MCF 10A (cell line): ENCODE measurements at regions of chr3 and their contacts with region 1.

Region 1: DNA sequence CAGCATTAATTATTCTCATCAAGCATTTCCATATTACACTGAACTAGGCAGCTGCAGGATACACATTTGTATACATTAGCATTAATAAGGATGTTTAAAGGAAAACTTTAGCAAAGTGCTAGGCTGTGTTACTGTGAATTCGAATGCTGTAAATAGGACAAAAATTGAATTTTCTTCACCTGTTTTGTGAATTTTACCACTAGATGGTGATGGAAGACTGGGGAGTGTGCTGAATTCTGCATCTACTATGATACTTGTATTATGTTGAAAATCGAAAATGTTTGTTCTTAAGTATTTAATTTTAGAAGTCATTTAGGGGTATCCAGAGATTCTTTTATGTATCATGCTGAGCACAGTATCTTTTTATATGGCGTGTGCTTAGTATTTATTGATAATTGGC is 12.3 kb upstream of the P2RY14 start:
- DNase-seq: peak; percentile 56
- H3K4me3 Mint-ChIP-seq: no peak overlapping the region
- H3K27ac Mint-ChIP-seq: no peak overlapping the region
- H3K4me1 Mint-ChIP-seq: no peaks in the 10 kb centered on the region
- H3K27me3 Mint-ChIP-seq: no peaks in the 10 kb centered on the region
- CTCF ChIP-seq: peak; percentile 75

Region 2: DNA sequence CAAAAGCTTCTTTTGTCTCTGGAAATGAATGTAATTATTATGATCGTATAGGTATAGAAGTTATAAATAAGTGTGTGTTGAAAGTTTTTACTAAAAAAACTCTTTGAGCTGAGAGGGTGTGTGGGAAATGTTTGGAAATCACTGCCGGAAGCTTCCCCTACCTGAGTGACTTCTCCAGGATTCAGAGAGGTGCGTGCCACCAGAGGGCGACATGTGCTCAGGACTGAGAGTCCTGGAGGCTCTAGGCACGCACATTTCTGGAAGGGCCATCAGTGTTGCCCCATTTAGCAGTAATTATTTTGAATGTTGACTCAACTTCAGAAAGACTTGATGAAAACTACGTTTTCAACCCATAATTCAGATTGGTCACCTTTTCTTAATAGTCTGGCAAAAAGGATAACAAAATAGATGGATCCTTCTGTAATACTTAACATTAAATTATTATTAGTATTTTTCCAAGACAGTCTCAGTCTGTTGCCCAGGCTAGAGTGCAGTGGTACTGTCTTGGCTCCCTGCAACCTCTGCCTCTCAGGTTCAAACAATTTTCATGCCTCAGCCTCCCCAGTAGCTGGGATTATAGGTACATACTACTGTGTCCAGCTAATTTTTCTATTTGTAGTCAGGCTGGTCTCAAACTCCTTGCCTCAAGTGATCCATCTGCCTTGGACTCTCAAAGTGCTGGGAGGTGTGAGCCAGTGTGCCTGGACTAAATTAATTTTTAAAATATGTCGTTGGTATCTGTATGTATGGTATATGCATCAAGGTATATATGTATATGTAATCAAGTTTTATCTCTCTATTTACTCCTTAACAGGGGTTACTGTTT is 122.2 kb before region 1 on chr3:
- CTCF ChIA-PET with region 1: interaction called, 51 read pairs
- POLR2A ChIA-PET with region 1: interaction called, 3 read pairs
- intact Hi-C with region 1: no loop called
- DNase-seq: peak; percentile 82
- H3K4me3 Mint-ChIP-seq: no peak overlapping the region
- H3K27ac Mint-ChIP-seq: no peak overlapping the region
- H3K4me1 Mint-ChIP-seq: no peaks in the 10 kb centered on the region
- H3K27me3 Mint-ChIP-seq: no peaks in the 10 kb centered on the region
- CTCF ChIP-seq: peak; percentile 88

Region 3: GRCh38 chr3:151327571-151328198 is 37.0 kb after region 1 on chr3:
- CTCF ChIA-PET with region 1: interaction called, 26 read pairs
- POLR2A ChIA-PET with region 1: interaction called, 23 read pairs
- intact Hi-C with region 1: loop called (anchors 1 kb)
- DNase-seq: peak; percentile 36
- H3K4me3 Mint-ChIP-seq: no peak overlapping the region
- H3K27ac Mint-ChIP-seq: no peak overlapping the region
- H3K4me1 Mint-ChIP-seq: peaks cover 8% of the 10 kb centered on the region
- H3K27me3 Mint-ChIP-seq: no peaks in the 10 kb centered on the region
- CTCF ChIP-seq: peak; percentile 52

Region 4: DNA sequence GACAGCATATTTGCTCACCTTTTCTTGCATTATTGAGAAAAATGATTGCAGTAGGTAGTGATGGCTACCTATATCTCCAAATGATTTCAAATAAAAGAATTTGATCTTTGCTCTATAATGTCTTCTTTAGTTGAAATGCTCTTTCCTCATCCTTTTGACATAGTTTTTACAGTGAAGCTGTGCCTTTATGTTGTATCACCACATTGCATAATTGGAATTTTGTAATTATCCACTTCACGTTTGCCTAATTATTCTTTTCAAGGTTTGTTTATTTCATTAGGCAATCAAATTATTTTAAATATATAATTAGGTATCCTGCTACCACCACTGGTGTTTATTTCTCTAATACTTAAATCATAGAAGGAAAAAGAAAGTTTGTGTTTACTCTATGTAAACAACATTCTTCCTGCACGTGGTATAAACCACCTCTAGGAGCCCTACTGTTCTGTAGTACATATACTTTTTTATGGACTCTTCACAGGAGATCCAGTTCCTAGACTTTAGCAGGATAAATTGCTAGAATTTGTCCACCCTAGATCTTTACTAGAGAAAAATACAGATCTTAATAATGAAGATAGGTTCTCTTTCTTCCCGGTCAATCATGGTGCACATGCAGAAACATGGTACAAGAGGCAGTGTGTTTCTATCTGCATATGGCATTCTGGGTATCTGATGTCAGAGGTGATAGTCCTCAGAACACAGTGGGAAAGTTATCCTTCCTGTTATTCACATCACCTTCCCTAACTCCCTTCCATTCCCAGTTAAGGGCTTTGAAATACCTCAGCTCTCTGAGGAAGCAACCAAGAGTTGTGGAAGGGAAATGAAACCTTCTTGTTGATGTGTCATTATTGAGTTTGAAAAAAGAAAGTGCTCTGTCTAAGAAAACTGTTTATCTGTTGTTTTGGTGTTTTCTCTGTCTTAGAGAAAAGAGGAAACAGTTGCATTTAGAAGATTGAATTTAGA is 60.3 kb after region 1 on chr3:
- CTCF ChIA-PET with region 1: no interaction called
- POLR2A ChIA-PET with region 1: no interaction called
- intact Hi-C with region 1: no loop called
- DNase-seq: no peak
- H3K4me3 Mint-ChIP-seq: no peak overlapping the region
- H3K27ac Mint-ChIP-seq: no peak overlapping the region
- H3K4me1 Mint-ChIP-seq: peaks cover 5% of the 10 kb centered on the region
- H3K27me3 Mint-ChIP-seq: no peaks in the 10 kb centered on the region
- CTCF ChIP-seq: no peak

Region 5: GRCh38 chr3:151468284-151468917 is 177.7 kb after region 1 on chr3:
- CTCF ChIA-PET with region 1: interaction called, 10 read pairs
- POLR2A ChIA-PET with region 1: no interaction called
- intact Hi-C with region 1: loop called (anchors 1 kb)
- DNase-seq: peak; percentile 78
- H3K4me3 Mint-ChIP-seq: no peak overlapping the region
- H3K27ac Mint-ChIP-seq: no peak overlapping the region
- H3K4me1 Mint-ChIP-seq: no peaks in the 10 kb centered on the region
- H3K27me3 Mint-ChIP-seq: peaks cover 15% of the 10 kb centered on the region
- CTCF ChIP-seq: peak; percentile 77

Region 6: DNA sequence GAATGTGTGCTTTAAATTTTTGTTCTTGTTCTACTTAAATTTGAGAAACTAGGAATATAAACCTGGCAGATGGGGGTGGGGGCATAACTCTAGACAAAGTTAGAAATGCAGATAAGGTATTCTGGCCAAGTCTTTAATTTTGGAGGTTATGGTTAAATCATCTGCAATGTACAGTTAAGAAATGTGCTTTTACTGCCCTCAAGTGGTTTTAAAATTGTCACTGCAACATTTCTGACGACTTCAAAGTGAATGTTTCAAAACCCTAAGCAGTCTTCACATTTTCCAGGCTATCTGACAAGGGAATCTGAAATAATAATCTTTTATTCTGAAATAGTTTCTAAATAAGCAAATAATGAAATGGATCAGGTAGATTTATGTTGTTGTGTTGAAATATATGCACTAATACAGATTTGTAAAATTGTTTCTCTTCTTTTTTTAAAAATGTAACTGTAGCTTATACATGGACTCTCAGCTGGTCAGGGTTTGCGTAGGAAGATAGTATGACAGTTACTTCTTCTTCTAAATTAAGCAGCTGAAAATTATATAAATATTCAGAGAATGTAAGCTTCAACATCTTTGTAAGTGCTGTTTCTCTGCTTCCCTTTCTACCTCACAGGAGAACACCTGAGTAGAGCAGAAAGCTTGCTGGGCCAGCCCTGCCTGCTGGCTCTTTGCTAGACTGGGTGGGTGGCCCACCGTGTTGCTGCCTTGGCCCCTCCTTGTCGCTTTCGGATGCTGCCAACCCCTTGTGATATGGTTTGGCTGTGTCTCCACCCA is 627.8 kb after region 1 on chr3:
- CTCF ChIA-PET with region 1: interaction called, 3 read pairs
- POLR2A ChIA-PET with region 1: no interaction called
- intact Hi-C with region 1: loop called (anchors 1 kb)
- DNase-seq: peak; percentile 50
- H3K4me3 Mint-ChIP-seq: no peak overlapping the region
- H3K27ac Mint-ChIP-seq: no peak overlapping the region
- H3K4me1 Mint-ChIP-seq: no peaks in the 10 kb centered on the region
- H3K27me3 Mint-ChIP-seq: no peaks in the 10 kb centered on the region
- CTCF ChIP-seq: peak; percentile 70